ENCODE measurements at regions of chr14 and their contacts with region 1.

Region 1: DNA sequence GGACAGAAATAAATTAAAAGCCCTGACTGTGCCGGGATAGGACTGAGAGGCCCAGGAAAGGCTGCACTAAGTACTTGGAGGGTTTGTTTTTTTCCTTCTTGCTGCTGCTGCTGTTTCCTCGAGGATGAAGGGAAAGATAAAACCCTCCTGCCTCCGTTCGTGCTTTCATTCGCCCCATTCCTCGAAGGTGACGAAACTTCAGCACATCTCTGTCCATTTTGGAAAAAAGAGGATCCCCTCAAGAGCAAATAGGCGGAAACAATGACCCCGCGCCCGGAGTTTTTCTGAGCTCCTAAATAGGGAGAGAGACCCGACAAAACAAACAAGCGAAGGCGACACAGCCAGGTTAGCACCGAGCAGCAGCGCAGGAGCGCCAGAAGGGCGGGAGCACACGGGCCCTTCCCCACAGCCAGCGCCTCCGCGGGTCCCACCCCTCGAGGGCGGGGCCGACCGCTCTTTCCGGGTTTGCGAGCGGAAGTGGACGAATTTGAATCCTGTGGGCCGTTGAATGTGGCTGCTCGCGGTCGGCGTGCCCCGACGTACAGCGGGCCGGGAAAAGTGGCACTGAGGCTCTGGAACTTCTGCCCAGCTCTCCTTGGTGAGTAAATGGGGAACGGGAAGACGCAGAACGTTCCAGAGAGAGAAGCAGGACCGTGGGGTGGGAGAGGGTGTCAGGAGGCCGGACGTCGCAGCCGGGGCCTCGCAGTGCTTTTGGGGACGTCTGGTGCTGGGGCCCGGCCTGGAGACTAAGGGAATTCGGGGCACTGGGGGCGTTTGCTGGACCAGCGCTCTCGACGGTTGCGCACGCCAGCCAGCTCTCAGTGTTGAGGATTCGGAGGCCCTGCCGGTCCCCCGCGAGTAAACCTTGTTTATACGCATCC is at the start of gene G2E3:
- DNase-seq: peak; percentile 43 to 91
- H3K4me3 ChIP-seq: peak within 1 kb of the TSS; percentile 90 to 98
- H3K27ac ChIP-seq: peak within 1 kb of the TSS; percentile 74 to 82
- H3K4me1 ChIP-seq: peaks cover 0 to 5% of the 10 kb centered on the region in 2 donors
- H3K27me3 ChIP-seq: no peaks in the 10 kb centered on the region
- CTCF ChIP-seq: no peak
- total RNA-seq, gene G2E3: 20.5 TPM

Region 2: DNA sequence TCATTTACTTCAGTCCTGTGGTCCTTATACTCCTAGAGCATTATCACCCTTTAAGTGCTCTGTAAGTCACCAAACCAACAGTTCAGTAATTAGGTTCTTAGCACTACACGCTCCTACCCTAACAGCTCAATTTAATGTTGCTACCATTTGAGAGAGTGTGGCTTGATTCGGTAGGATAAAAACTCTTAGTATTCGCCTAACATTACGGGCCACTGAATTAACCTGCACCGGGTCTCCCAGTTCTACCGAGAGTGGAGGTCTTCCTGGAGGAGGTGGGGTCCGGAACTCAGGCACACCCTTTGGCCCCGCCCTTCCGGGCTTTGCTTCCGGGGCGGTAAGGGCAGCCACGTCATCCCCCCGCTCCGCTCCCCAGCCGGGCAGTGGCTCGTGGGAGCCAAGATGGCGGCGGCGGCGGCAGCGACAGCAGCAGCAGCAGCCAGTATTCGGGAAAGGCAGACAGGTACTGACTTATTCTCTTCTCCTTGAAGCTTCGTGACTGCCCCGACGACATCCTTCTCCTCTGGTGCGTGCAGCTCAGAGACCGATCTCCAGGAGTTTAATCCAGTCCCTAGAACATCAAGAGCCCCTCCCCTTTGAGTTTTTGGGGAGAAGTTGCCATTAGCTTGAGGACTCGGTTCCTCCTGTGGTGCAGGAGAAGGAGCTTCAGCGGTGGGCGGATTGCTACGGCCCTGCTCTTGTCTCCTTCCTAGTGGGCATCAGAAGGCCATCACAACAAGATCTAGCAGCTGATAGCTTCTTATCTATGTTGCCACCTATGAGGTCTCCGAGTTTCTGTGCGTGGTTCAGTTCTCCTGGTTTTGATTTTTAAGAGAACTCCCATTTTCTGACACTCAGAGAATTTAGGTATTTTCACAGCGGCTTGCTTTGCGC is 63.3 kb after region 1 on chr14 and contains the start of gene SCFD1:
- intact Hi-C with region 1: loop called (anchors 2 kb)
- DNase-seq: peak; percentile 68 to 97
- H3K4me3 ChIP-seq: peak within 1 kb of the TSS; percentile 82 to 88
- H3K27ac ChIP-seq: peak within 1 kb of the TSS; percentile 76 to 83
- H3K4me1 ChIP-seq: peaks cover 0 to 6% of the 10 kb centered on the region in 2 donors
- H3K27me3 ChIP-seq: no peaks in the 10 kb centered on the region
- CTCF ChIP-seq: peak in 1 of 3 experiments; percentile 4
- total RNA-seq, gene SCFD1: 41.0 TPM

Measured in ascending aorta (tissue), 2 donors.